HEK293 (cell line): ENCODE measurements at regions of chr13 and their contacts with region 1.

Region 1: DNA sequence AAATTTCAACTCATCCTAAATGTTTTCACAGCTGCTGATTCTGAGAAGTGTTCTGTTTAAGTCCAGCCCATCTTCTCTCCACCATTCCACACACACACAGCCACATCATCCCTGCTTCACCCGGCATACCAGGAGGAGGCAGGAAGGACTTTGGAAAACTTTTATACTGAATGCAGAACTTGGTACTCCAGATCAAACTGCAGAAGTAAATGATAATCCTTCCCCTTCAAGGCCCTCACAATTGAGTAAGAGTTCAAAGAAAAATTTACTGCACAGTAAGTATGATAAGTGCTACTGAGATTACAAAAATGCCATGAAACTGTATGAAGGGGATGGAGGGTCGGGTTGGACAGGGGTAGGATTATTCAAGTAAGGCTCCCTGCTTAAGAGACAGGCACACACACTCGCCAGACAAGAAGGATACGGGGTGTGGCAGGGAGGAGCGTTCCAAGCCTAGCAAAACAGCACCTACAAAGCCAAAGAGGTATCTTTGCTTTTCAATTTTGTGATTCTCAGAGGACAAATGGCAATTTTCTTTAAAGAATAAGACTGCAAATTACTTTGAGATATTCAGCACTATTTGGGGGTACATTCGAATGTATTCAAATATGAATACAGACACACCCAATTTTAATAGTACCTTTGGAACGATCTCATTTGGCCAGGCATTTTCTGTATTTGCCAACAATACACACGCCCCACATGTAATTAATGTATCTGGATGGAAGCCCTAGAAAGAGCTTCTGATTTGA is 2.5 kb downstream of the USP12 start:
- H3K4me3 ChIP-seq: no peak overlapping the region
- H3K27ac ChIP-seq: no peak overlapping the region
- H3K4me1 ChIP-seq: peaks cover 16% of the 10 kb centered on the region
- CTCF ChIP-seq: no peak

Region 2: DNA sequence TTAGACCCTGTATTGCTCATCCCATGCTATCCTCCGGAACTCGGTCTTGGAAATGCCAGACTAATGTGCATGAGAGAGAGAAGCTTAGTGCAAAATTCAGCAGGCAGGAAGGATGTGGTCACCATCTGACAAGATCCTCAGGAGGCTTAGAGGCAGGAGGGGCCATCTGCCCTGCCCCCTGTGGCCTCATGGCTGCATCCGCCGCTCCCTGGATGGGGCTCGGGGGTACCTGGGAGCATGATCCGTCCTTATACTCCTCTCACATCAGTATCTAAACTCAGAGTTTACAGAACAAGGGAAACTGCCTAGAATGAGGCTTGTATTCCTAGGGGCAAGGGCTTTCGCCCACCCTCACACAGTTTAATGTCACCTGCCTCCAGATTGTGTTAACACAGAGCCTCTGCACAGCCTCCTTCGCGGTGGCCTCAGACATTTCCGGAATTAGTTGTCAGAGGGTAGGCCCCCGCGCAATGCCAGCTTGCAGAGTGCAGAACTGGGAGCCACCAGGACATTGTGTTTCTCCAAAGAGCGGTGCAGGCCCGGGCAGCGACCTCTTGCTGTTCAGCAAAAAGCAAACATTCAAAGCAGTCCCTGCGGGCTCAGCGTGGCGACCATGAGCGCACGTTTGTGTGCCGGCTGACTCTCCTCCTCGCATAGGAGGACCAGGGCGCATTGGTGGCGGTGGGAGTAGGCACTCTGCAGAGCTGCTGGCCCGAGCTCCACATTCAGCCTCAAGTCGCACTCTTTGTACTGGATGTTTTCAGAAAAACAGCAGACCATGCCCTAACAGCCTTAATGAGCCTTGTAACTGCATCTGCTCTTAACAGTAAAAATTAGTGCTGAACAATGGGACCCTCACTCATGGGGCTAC is 447.6 kb before region 1 on chr13:
- CTCF ChIA-PET with region 1: no interaction called
- POLR2A ChIA-PET with region 1: no interaction called
- H3K4me3 ChIP-seq: no peak overlapping the region
- H3K27ac ChIP-seq: no peak overlapping the region
- H3K4me1 ChIP-seq: no peaks in the 10 kb centered on the region
- CTCF ChIP-seq: no peak

Region 3: DNA sequence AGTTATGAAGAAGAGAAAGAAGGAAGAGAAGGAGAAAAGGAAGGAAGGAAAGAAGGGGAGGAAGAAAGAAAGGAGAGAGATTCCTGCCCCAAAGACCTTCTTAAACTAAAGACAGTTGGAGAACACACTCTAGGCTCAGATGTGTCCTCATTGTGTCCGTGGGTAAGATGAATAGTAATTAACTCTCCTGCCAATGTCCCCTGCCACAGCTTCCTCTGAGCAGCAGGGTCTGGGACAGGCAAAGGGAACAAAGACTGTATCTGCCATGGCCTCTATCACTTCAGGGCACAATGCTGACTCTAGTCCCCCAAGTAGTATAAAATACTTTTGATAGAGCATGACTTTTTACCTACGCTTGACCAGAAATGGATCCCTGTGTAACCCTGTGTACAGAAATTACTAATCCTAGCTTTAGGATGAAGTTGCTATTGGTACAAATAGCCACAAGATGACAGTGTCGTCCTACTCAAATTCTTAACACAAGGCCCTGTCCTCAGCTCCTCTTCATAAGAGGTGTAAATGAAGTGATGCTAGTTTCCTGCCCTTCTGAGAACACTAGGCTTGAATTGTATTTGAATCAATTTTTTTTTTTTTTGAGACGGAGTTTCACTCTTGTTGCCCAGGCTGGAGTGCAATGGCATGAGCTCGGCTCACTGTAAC is 222.3 kb before region 1 on chr13:
- CTCF ChIA-PET with region 1: interaction called, 13 read pairs
- POLR2A ChIA-PET with region 1: no interaction called
- H3K4me3 ChIP-seq: no peak overlapping the region
- H3K27ac ChIP-seq: no peak overlapping the region
- H3K4me1 ChIP-seq: peaks cover 7% of the 10 kb centered on the region; the same call in 1 of the 2 replicates
- CTCF ChIP-seq: peak; percentile 80

Region 4: GRCh38 chr13:27151798-27152599 is 17.1 kb before region 1 on chr13:
- CTCF ChIA-PET with region 1: no interaction called
- POLR2A ChIA-PET with region 1: interaction called, 13 read pairs
- H3K4me3 ChIP-seq: no peak overlapping the region
- H3K27ac ChIP-seq: no peak overlapping the region
- H3K4me1 ChIP-seq: peaks cover 15% of the 10 kb centered on the region
- CTCF ChIP-seq: no peak

Region 5: GRCh38 chr13:27403203-27403678 is 234.2 kb after region 1 on chr13:
- CTCF ChIA-PET with region 1: no interaction called
- POLR2A ChIA-PET with region 1: no interaction called
- H3K4me3 ChIP-seq: no peak overlapping the region
- H3K27ac ChIP-seq: no peak overlapping the region
- H3K4me1 ChIP-seq: no peaks in the 10 kb centered on the region
- CTCF ChIP-seq: no peak

Region 6: DNA sequence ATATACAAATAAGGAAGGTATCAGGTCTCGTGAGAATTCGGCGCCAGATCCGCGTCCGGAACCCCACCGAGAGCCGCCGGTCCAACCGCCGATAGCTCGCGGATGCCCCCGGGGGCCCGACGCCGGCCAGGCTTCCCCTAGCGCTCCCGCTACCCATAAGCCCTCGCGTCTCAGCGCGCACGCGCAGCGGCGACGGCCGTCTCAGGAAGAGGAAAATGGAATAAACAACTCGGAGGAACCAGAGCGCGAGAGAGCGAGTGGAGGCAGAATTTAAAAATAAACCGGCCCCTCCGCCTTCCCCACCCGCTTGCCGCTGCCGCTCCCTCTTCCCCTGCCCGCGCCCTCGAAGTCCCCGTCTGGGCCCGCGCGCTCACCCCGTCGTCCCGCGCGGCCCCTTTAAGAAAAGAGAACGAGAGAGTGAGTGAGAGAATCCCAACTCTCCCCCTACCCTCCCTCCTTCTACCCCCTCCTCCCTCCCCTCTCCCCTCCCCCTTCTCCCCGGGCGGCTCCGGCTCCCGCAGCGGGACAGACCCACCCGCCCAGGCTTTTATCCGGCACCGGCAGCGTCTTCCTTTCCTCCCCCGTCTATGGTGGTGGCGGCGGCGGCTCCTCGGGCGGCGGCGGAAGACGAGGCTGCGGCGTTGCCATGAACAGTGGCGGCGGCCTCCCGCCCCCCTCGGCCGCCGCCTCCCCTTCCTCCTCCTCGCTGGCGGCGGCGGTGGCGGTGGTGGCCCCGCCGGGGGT is 969.1 kb after region 1 on chr13 and contains the start of gene PAN3:
- CTCF ChIA-PET with region 1: no interaction called
- POLR2A ChIA-PET with region 1: no interaction called
- H3K4me3 ChIP-seq: peak within 1 kb of the TSS; percentile 70
- H3K27ac ChIP-seq: peak within 1 kb of the TSS; percentile 99
- H3K4me1 ChIP-seq: peaks cover 3% of the 10 kb centered on the region; the same call in 1 of the 2 replicates
- CTCF ChIP-seq: peak; percentile 20; the same call in 1 of the 2 replicates